ENCODE measurements at regions of chr11 and their contacts with region 1.

Region 1: DNA sequence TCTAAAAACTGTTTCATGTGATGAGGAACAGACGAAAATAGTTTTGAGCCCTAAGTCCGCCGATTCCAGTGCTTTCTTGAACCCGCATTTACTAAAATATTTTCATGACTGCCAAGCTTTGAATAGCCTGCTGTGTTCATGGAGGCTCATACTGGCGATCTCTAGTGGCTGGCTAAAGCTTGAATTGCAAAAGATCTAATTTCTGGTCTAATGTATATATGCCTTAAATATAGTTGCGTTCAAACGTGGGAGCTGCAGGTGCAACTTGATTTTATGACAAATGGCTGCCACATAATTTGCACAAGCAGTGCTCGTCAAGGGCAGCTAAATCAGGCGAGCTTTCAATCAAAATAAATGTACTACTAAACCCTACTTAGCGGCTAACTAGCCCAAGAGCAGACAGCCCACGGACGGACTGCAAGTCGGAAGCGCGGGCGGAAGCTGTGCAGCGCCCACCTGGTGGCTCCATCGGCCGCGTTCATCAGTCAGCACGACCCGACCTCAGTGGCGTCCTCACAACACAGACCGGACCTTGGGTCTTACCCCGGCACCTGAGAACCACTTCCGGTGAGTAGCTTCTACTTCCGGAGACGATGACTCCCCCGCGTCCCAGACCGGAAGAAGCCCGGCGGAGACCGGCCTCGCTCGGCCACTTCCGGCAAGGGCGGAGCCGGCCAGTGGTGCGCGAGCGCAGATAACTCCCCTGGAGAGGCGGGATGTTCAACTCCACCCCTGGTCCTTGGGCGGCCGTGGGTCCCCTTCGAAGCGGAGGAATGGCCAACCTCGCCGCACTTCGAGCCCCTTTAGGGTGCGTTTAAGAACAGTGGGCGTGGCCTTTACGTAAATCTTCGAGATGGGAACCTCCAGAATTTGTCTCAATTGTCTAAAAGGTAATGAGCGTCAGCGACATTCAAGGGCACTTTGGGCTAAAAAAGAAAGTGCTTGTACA is 6.1 kb downstream of the RPL27A start:
- DNase-seq: peak; percentile 92 to 95
- ATAC-seq: peak; percentile 98 to 99
- H3K4me3 ChIP-seq: peak overlapping the region; percentile 54 to 74 (median 70)
- H3K27ac ChIP-seq: peak overlapping the region; percentile 80 to 88 (median 86)
- H3K4me1 ChIP-seq: peaks cover 27 to 30% of the 10 kb centered on the region in 2 donors
- H3K27me3 ChIP-seq: no peaks in the 10 kb centered on the region
- CTCF ChIP-seq: peak; percentile 8 to 41 (median 15)
- POLR2A ChIP-seq: peak; percentile 55 to 57

Region 2: DNA sequence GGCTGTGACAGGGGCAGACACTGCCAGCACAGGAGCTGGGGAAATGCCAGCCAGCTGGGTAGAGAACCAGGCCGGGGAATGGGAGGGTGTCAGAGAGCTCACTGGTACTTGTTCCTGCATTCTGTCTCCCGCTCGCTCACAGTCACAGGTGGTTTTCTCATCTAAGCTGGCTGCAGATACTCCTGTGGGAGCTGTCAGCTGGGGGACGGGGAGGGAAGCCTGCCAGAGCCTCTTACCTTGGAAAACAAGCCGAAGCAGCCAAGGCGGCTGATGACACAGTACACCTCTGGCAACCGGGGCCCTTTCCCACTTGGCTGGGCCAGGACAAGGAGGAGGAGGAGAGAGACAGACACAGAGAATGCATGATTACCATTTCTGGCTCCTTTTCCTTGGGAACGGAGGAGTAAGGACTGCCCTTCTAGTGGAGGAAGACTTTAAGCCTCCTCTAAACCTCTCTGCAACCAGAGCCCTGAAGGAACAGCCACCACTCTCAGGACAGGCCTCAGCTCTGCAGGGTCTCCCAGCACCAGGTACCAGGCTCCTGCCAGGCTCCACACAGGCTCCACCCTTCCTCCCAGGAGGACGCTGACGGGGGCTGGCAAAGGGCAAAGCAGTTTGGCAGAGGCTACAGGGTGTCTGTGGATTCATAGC is 19.0 kb after region 1 on chr11:
- in situ Hi-C with region 1: no loop called
- intact Hi-C with region 1: loop called (anchors 2 kb)
- DNase-seq: peak; percentile 83 to 89
- ATAC-seq: peak; percentile 79 to 82
- H3K4me3 ChIP-seq: no peak overlapping the region
- H3K27ac ChIP-seq: peak overlapping the region; percentile 55 to 84 (median 80)
- H3K4me1 ChIP-seq: peaks cover 29 to 33% of the 10 kb centered on the region in 2 donors
- H3K27me3 ChIP-seq: no peaks in the 10 kb centered on the region
- CTCF ChIP-seq: no peak
- POLR2A ChIP-seq: no peak

Region 3: DNA sequence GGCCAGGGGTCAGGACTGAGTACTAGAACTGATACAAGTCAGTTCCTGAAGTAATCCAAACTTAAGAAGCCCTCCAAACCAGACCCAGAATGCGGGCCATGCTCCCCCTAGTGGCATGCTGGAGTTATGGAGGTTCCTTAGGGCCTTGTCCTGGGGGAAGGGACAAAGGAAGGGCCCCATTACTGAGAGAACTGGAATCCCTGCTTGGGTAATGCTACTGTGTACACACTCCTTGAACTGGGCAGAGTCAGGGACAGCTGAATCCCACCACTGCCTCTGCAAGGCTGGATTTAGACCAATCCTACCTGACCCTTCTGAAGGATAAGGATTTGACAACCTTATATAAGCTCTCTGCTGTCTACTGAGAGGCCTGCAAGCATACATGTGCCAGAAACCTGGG is 125.0 kb after region 1 on chr11:
- in situ Hi-C with region 1: loop called (anchors 5 to 25 kb)
- intact Hi-C with region 1: no loop called
- DNase-seq: peak; percentile 48 to 69
- ATAC-seq: peak; percentile 47 to 75
- H3K4me3 ChIP-seq: no peak overlapping the region
- H3K27ac ChIP-seq: peak overlapping the region; percentile 17 to 57 (median 50)
- H3K4me1 ChIP-seq: peaks cover 24 to 39% of the 10 kb centered on the region in 2 donors
- H3K27me3 ChIP-seq: no peaks in the 10 kb centered on the region
- CTCF ChIP-seq: peak; percentile 71 to 86 (median 76)
- POLR2A ChIP-seq: no peak

Region 4: DNA sequence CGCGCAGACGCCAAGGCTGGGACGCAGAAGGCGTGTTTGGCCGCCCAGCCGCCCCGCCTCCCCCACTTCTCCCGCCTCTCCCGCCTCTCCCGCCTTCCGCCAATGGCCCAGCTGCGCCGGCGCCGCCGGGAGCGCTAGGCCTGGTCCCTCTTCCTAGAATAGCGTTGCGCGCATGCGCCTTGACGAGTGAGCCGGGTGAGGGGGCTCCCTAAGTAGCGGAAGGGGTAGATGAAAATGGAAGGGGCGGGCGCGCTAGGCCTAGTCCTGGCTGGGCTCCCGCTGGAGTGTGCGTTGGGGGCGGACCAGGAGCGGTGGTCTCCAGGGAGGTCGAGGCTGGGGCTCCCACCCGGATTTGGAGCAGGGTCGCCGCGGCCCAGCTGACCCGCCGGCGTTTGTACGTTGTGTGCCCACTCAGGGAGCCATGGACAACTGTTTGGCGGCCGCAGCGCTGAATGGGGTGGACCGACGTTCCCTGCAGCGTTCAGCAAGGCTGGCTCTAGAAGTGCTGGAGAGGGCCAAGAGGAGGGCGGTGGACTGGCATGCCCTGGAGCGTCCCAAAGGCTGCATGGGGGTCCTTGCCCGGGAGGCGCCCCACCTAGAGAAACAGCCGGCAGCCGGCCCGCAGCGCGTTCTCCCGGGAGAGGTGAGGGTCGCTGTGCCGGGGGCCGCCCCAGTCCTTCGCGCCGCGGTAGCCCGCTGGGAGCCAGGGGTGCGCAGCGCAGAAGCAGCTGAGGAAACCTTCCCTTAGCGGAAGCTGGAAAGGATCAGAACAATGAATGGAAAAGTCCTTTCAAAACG is 222.5 kb after region 1 on chr11 and contains the start of gene AKIP1:
- in situ Hi-C with region 1: loop called in 1 of 4 experiments (anchors 25 kb)
- intact Hi-C with region 1: loop called (anchors 2 kb)
- DNase-seq: peak; percentile 89 to 91
- ATAC-seq: peak; percentile 93
- H3K4me3 ChIP-seq: peak within 1 kb of the TSS; percentile 88 to 95 (median 94)
- H3K27ac ChIP-seq: peak within 1 kb of the TSS; percentile 86 to 93 (median 90)
- H3K4me1 ChIP-seq: peaks cover 10 to 21% of the 10 kb centered on the region in 2 donors
- H3K27me3 ChIP-seq: no peaks in the 10 kb centered on the region
- CTCF ChIP-seq: no peak
- POLR2A ChIP-seq: peak in 1 of 2 donors; percentile 51
- total RNA-seq, gene AKIP1: 13.8 to 33.5 (median 25.0) TPM

Region 5: GRCh38 chr11:9137293-9138132 is 448.8 kb after region 1 on chr11:
- in situ Hi-C with region 1: loop called in 1 of 4 experiments (anchors 25 kb)
- intact Hi-C with region 1: no loop called
- DNase-seq: peak; percentile 27 to 59
- ATAC-seq: peak; percentile 79 to 92
- H3K4me3 ChIP-seq: no peak overlapping the region
- H3K27ac ChIP-seq: peak overlapping the region in 1 of 4 donors; percentile 37
- H3K4me1 ChIP-seq: peaks cover 0 to 11% of the 10 kb centered on the region in 2 donors
- H3K27me3 ChIP-seq: no peaks in the 10 kb centered on the region
- CTCF ChIP-seq: peak; percentile 73 to 91 (median 81)
- POLR2A ChIP-seq: no peak

Measured in gastrocnemius medialis (tissue), 4 donors.